CD8-positive, alpha-beta T cell (primary cell): ENCODE measurements at regions of chr11 and their contacts with region 1.

Region 1: DNA sequence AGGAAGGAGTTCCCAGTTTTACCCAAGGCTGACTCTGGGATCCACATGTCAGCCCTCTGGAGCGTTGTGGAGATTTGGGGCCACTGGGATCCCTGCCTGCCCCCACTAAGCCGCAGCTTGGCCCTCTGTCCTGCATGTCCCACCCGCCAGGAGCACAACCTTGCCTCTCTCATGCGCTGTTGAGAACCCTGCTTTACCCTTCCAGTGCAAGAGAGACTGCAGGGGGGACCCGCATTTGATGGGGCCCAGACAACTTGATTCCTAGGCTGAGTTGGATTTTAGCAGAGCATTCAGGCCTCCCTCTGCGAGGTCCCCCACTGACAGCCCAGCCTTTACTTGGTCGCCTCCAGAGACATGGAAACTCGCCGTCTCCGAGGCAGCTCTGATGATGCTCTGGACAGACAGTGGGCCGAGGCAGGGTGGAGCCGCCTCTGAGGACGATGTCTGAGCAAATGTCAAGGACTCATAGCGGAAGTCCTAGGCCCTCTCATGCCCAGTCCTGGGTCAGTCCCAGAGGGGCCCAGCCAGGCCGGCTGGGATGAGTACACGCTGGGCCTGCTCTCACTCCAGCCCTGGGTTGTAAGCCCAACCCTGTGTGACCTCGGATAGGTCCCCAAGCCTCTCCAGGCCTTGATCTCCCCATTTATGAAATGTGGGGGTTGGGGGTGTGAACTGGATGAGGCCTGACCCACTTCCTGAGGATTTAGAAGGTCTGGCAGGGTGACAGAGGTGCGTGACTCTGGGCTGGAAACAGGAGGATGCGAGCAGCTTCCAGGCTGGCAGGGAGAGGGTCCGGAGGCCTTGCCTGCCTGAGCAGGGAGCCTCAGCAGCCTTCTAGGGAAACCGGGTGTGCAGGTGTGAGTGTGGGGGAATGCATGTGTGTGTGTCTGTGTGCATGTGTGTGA is 630 bp downstream of the CD5 start:
- DNase-seq: peak in 2 of 9 experiments; percentile 49 to 72
- ATAC-seq: peak; percentile 31
- H3K4me3 ChIP-seq: peak overlapping the region; percentile 87 to 91
- H3K4me3 Mint-ChIP-seq: no peak overlapping the region
- H3K27ac ChIP-seq: peak overlapping the region; percentile 90 to 93
- H3K27ac Mint-ChIP-seq: no peak overlapping the region
- H3K4me1 ChIP-seq: peaks cover 48% of the 10 kb centered on the region
- H3K4me1 Mint-ChIP-seq: peaks cover 40% of the 10 kb centered on the region
- H3K27me3 ChIP-seq: no peaks in the 10 kb centered on the region
- H3K27me3 Mint-ChIP-seq: no peaks in the 10 kb centered on the region
- CTCF ChIP-seq: no peak

Region 2: GRCh38 chr11:61028272-61028761 is 74.6 kb before region 1 on chr11:
- CTCF ChIA-PET with region 1: interaction called, 3 read pairs
- POLR2A ChIA-PET with region 1: interaction called, 4 read pairs
- intact Hi-C with region 1: loop called (anchors 2 to 5 kb)
- DNase-seq: peak in 8 of 9 experiments; percentile 29 to 80 (median 72)
- ATAC-seq: peak; percentile 19
- H3K4me3 ChIP-seq: peak overlapping the region; percentile 21 to 38
- H3K4me3 Mint-ChIP-seq: peak overlapping the region; percentile 83
- H3K27ac ChIP-seq: peak overlapping the region; percentile 44 to 66
- H3K27ac Mint-ChIP-seq: peak overlapping the region; percentile 95
- H3K4me1 ChIP-seq: peaks cover 61% of the 10 kb centered on the region
- H3K4me1 Mint-ChIP-seq: peaks cover 66% of the 10 kb centered on the region
- H3K27me3 ChIP-seq: no peaks in the 10 kb centered on the region
- H3K27me3 Mint-ChIP-seq: no peaks in the 10 kb centered on the region
- CTCF ChIP-seq: no peak

Region 3: GRCh38 chr11:61061081-61061826 is 41.7 kb before region 1 on chr11:
- CTCF ChIA-PET with region 1: no interaction called
- POLR2A ChIA-PET with region 1: no interaction called
- intact Hi-C with region 1: loop called in 1 of 2 experiments (anchors 5 kb)
- DNase-seq: peak in 8 of 9 experiments; percentile 55 to 94 (median 70)
- ATAC-seq: peak; percentile 82
- H3K4me3 ChIP-seq: peak overlapping the region; percentile 8 to 16
- H3K4me3 Mint-ChIP-seq: peak overlapping the region; percentile 76
- H3K27ac ChIP-seq: peak overlapping the region; percentile 9 to 81
- H3K27ac Mint-ChIP-seq: peak overlapping the region; percentile 92
- H3K4me1 ChIP-seq: peaks cover 37% of the 10 kb centered on the region
- H3K4me1 Mint-ChIP-seq: peaks cover 57% of the 10 kb centered on the region
- H3K27me3 ChIP-seq: no peaks in the 10 kb centered on the region
- H3K27me3 Mint-ChIP-seq: no peaks in the 10 kb centered on the region
- CTCF ChIP-seq: no peak

Region 4: DNA sequence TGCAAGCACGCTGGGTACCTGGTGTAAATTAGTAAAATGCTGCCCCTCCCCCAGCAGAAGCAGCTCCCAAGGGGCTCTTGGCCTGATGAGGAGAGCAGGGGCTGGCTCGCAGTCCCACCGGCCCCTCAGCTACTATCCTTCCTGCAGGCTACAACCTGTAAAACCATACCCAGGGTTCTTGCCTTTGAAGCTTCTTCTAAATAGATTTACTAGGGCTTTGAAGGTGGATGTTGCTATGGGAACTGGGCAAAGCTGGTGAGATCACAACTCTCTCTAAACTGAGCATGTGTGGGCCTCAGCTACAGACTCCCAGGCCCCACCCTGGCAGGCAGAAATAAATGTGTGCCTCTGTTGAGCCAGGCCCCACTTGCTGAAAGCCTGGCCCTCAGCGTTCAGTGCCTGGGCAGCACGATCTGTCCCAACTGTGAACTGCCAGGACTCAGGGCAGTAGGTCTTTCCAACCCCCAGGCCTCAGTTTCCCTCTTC is 17.8 kb after region 1 on chr11:
- CTCF ChIA-PET with region 1: interaction called, 7 read pairs
- POLR2A ChIA-PET with region 1: interaction called, 4 read pairs
- intact Hi-C with region 1: loop called in 1 of 2 experiments (anchors 1 kb)
- DNase-seq: peak in 8 of 9 experiments; percentile 30 to 92 (median 70)
- ATAC-seq: peak; percentile 86
- H3K4me3 ChIP-seq: peak overlapping the region in 1 of 2 experiments; percentile 24
- H3K4me3 Mint-ChIP-seq: peak overlapping the region; percentile 76
- H3K27ac ChIP-seq: peak overlapping the region; percentile 73 to 76
- H3K27ac Mint-ChIP-seq: peak overlapping the region; percentile 96
- H3K4me1 ChIP-seq: peaks cover 35% of the 10 kb centered on the region
- H3K4me1 Mint-ChIP-seq: peaks cover 64% of the 10 kb centered on the region
- H3K27me3 ChIP-seq: peaks cover 0 to 4% of the 10 kb centered on the region in 2 experiments
- H3K27me3 Mint-ChIP-seq: no peaks in the 10 kb centered on the region
- CTCF ChIP-seq: no peak

Region 5: DNA sequence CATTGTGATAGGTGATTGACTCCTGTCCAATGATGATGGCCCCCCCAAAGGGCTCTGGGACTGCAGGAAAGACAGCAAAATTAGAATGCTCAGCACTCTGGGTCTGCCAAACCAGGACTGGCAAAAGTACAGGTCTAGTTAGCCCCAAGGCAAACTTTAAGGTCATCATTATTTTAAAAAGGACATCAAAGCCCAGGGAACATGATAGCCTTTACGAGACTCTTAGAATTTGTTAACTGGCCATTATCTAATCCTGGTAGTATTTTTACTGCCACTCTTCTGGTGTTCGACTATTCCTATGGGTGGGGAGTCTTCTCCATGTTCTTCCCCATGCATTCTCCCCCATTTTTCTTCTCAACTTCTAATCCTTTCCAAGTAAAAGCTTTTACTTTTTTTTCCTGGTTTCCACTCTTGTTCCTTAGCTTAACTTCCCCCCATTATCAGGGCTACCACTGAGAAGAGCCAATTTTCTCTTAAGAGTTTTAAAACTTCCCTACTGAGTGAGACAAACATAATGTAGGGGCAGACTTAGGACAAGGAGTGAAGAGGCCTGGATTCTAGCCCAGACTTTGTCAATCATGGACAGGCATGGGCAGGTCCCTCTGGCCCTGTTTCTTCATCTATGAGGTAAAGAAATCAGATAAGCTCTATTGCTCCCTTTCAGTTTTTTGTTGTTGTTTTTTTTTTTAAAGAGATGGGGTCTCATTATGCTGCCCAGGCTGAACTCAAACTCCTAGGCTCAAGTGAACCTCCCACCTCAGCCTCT is 222.9 kb after region 1 on chr11:
- CTCF ChIA-PET with region 1: no interaction called
- POLR2A ChIA-PET with region 1: no interaction called
- intact Hi-C with region 1: no loop called
- DNase-seq: no peak
- ATAC-seq: no peak
- H3K4me3 ChIP-seq: no peak overlapping the region
- H3K4me3 Mint-ChIP-seq: no peak overlapping the region
- H3K27ac ChIP-seq: no peak overlapping the region
- H3K27ac Mint-ChIP-seq: no peak overlapping the region
- H3K4me1 ChIP-seq: peaks cover 3% of the 10 kb centered on the region
- H3K4me1 Mint-ChIP-seq: peaks cover 29% of the 10 kb centered on the region
- H3K27me3 ChIP-seq: no peaks in the 10 kb centered on the region
- H3K27me3 Mint-ChIP-seq: no peaks in the 10 kb centered on the region
- CTCF ChIP-seq: no peak